ENCODE measurements at regions of chr6 and their contacts with region 1.

Region 1: DNA sequence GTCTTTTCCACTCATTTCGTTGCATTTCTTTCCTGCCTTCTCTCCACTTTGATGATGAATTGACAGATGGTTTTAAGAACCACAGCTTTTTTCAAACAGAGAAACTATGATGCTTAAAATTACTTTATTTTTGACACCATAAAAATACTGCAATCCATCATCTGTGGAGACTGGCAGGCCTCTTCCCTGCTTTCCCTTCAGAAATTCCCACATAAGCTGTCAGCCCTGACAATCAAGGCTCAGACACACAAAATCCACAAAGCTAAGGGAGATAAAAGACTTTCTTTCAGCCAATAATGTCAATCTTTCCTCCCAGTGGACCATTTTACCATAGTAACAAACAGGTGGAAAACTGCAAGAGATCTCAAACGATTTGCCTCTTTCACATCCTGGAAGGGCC is 82.4 kb downstream of the IPCEF1 start:
- DNase-seq: no peak
- H3K4me3 ChIP-seq: no peak overlapping the region
- H3K27ac ChIP-seq: no peak overlapping the region
- H3K4me1 ChIP-seq: peaks cover 0 to 13% (median 4%) of the 10 kb centered on the region in 4 donors
- H3K27me3 ChIP-seq: no peaks in the 10 kb centered on the region
- CTCF ChIP-seq: no peak
- EP300 ChIP-seq: no peak
- POLR2A ChIP-seq: no peak

Region 2: DNA sequence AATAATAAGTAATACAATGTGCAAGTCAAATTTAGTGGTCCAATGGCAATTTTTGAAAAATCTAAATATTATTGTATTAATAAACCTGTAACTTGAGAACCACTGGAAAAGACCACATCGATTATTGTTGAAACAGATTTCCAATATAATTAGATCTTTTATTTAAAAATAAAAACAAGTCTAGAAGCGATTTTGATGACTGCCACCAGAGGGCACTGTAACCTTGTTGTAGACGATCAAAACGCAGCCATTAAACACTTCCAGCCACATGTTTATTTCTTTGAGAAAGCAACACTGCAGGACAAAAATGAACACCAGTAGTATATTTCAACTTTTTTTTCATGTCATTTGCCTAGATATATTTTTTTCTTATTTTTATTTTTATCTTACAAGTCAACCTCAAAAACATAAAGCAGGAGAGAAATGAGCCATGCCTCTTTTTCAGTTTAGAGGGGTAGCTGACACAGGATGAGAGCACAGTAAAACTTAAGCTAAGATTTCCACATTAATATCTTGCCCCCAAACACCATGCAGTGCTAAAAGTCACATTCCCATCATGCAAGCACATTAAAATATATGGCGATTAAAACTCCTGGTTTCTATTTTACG is 119.7 kb before region 1 on chr6:
- intact Hi-C with region 1: loop called (anchors 5 kb)
- DNase-seq: peak; percentile 78 to 89
- H3K4me3 ChIP-seq: no peak overlapping the region
- H3K27ac ChIP-seq: no peak overlapping the region
- H3K4me1 ChIP-seq: peaks cover 0 to 33% (median 22%) of the 10 kb centered on the region in 4 donors
- H3K27me3 ChIP-seq: no peaks in the 10 kb centered on the region
- CTCF ChIP-seq: peak in 5 of 7 experiments; percentile 30 to 80 (median 77)
- EP300 ChIP-seq: no peak
- POLR2A ChIP-seq: no peak

Region 3: DNA sequence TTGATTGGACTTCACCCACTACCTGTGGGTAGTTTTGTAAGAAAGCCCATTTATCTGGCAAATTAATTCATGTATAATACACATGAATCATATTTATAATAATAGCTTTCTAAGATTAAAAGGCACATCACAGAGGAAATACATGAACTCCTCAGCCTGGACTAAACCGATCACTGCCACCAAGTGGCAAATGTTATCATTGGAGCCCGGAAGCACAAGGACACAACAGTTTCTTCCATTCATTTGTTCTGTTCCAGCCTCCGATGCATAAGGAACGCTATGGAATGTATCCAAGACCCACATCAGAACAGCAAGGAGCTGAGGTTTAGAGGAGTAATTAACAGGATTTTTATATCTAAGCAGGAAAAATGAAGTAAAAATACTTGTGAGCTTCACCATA is 96.4 kb after region 1 on chr6:
- intact Hi-C with region 1: no loop called
- DNase-seq: peak in 1 of 2 donors; percentile 73
- H3K4me3 ChIP-seq: no peak overlapping the region
- H3K27ac ChIP-seq: no peak overlapping the region
- H3K4me1 ChIP-seq: peaks cover 0 to 18% (median 10%) of the 10 kb centered on the region in 4 donors
- H3K27me3 ChIP-seq: no peaks in the 10 kb centered on the region
- CTCF ChIP-seq: peak in 1 of 7 experiments; percentile 27
- EP300 ChIP-seq: no peak
- POLR2A ChIP-seq: no peak

Measured in stomach (tissue), 19 donors.